ENCODE measurements at regions of chr12 and their contacts with region 1.

Region 1: GRCh38 chr12:54032627-54033100 is at the start of gene HOXC5:
- DNase-seq: peak; percentile 84
- H3K4me3 Mint-ChIP-seq: peak within 1 kb of the TSS; percentile 83
- H3K27ac Mint-ChIP-seq: no peak within 1 kb of the TSS
- H3K4me1 Mint-ChIP-seq: peaks cover 14% of the 10 kb centered on the region
- H3K27me3 Mint-ChIP-seq: peaks cover 99% of the 10 kb centered on the region
- CTCF ChIP-seq: peak; percentile 97
- total RNA-seq, gene HOXC5: 0.20 TPM in 1 of 2 replicates, not detected in the other

Region 2: DNA sequence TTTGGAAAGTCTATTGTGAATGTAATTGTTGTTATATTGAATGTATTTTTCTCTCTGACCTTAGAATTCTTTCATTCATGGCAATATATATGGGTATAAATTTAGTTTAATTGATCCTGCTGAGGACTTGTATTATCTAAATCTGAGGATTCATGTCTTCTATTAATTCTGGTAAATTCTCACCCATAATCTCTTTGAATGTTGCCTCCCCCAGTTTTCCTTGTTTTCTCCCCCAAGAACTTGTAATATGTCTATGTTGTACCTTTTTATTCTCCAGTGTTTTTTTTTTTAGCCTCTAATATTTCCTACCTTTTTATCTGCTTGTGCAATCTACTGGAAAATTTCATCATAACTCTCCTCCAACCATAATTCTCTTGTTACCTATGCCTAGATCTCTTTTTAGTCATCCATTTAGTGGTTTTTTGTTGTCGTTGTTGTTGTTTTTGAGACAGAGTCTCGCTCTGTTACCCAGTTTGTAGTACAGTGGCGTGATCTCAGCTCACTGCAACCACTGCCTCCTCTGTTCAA is 115.5 kb before region 1 on chr12:
- CTCF ChIA-PET with region 1: no interaction called
- intact Hi-C with region 1: no loop called
- DNase-seq: no peak
- H3K4me3 Mint-ChIP-seq: no peak overlapping the region
- H3K27ac Mint-ChIP-seq: no peak overlapping the region
- H3K4me1 Mint-ChIP-seq: no peaks in the 10 kb centered on the region
- H3K27me3 Mint-ChIP-seq: peaks cover 2% of the 10 kb centered on the region
- CTCF ChIP-seq: no peak

Region 3: GRCh38 chr12:53938326-53939140 is 94.1 kb before region 1 on chr12 and contains the start of gene HOXC13:
- CTCF ChIA-PET with region 1: no interaction called
- intact Hi-C with region 1: no loop called
- DNase-seq: peak; percentile 67
- H3K4me3 Mint-ChIP-seq: peak within 1 kb of the TSS; percentile 33
- H3K27ac Mint-ChIP-seq: no peak within 1 kb of the TSS
- H3K4me1 Mint-ChIP-seq: no peaks in the 10 kb centered on the region
- H3K27me3 Mint-ChIP-seq: peaks cover 97% of the 10 kb centered on the region
- CTCF ChIP-seq: no peak
- total RNA-seq, gene HOXC13: not detected in 2 replicates

Region 4: GRCh38 chr12:54005853-54006686 is 26.6 kb before region 1 on chr12:
- CTCF ChIA-PET with region 1: interaction called, 16 read pairs
- intact Hi-C with region 1: no loop called
- DNase-seq: peak; percentile 90
- H3K4me3 Mint-ChIP-seq: peak overlapping the region; percentile 28
- H3K27ac Mint-ChIP-seq: no peak overlapping the region
- H3K4me1 Mint-ChIP-seq: peaks cover 12% of the 10 kb centered on the region
- H3K27me3 Mint-ChIP-seq: peaks cover 100% of the 10 kb centered on the region
- CTCF ChIP-seq: peak; percentile 95

Region 5: DNA sequence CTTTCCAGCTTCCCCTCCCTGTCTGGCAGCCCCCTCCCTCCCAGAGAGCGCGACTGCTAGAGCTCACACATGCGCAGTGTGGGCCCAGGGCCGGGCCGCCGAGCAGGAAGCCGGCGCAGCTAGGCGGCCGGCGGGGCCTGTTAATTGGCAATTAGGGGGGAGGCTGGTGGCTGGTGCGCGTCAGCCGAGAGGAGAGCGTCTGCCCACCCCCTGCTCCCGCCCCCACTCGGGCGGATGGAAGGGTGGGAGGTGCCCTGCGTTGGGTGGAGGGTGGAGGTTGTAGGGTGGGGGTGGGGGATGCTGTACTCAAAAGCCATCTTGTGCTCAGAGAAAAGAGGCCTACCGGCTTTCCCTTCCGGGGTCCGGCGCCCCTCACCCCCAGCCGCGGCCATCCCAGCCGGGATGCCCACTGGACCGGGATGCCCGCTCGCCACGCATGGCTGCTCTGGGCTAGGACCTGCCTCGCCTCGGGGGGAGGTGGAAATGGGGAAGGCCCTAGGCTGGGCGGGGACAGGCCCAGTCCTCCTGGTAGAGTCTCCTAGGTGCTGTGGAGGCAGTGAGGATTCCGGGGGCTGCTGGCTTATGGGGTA is 14.7 kb before region 1 on chr12:
- CTCF ChIA-PET with region 1: interaction called, 25 read pairs
- intact Hi-C with region 1: no loop called
- DNase-seq: peak; percentile 81
- H3K4me3 Mint-ChIP-seq: peak overlapping the region; percentile 77
- H3K27ac Mint-ChIP-seq: no peak overlapping the region
- H3K4me1 Mint-ChIP-seq: no peaks in the 10 kb centered on the region
- H3K27me3 Mint-ChIP-seq: peaks cover 80% of the 10 kb centered on the region
- CTCF ChIP-seq: no peak

Region 6: GRCh38 chr12:54134850-54135249 is 102.2 kb after region 1 on chr12:
- CTCF ChIA-PET with region 1: interaction called, 17 read pairs
- intact Hi-C with region 1: loop called (anchors 1 kb)
- DNase-seq: peak; percentile 15
- H3K4me3 Mint-ChIP-seq: no peak overlapping the region
- H3K27ac Mint-ChIP-seq: no peak overlapping the region
- H3K4me1 Mint-ChIP-seq: peaks cover 45% of the 10 kb centered on the region
- H3K27me3 Mint-ChIP-seq: no peaks in the 10 kb centered on the region
- CTCF ChIP-seq: no peak

Region 7: GRCh38 chr12:54191550-54192022 is 158.9 kb after region 1 on chr12:
- CTCF ChIA-PET with region 1: interaction called, 59 read pairs
- intact Hi-C with region 1: loop called (anchors 1 kb)
- DNase-seq: peak; percentile 85
- H3K4me3 Mint-ChIP-seq: no peak overlapping the region
- H3K27ac Mint-ChIP-seq: no peak overlapping the region
- H3K4me1 Mint-ChIP-seq: peaks cover 24% of the 10 kb centered on the region
- H3K27me3 Mint-ChIP-seq: peaks cover 66% of the 10 kb centered on the region
- CTCF ChIP-seq: peak; percentile 76

Region 8: GRCh38 chr12:54201001-54201794 is 168.5 kb after region 1 on chr12:
- CTCF ChIA-PET with region 1: interaction called, 58 read pairs
- intact Hi-C with region 1: no loop called
- DNase-seq: peak; percentile 88
- H3K4me3 Mint-ChIP-seq: no peak overlapping the region
- H3K27ac Mint-ChIP-seq: no peak overlapping the region
- H3K4me1 Mint-ChIP-seq: no peaks in the 10 kb centered on the region
- H3K27me3 Mint-ChIP-seq: peaks cover 82% of the 10 kb centered on the region
- CTCF ChIP-seq: peak; percentile 98

Region 9: DNA sequence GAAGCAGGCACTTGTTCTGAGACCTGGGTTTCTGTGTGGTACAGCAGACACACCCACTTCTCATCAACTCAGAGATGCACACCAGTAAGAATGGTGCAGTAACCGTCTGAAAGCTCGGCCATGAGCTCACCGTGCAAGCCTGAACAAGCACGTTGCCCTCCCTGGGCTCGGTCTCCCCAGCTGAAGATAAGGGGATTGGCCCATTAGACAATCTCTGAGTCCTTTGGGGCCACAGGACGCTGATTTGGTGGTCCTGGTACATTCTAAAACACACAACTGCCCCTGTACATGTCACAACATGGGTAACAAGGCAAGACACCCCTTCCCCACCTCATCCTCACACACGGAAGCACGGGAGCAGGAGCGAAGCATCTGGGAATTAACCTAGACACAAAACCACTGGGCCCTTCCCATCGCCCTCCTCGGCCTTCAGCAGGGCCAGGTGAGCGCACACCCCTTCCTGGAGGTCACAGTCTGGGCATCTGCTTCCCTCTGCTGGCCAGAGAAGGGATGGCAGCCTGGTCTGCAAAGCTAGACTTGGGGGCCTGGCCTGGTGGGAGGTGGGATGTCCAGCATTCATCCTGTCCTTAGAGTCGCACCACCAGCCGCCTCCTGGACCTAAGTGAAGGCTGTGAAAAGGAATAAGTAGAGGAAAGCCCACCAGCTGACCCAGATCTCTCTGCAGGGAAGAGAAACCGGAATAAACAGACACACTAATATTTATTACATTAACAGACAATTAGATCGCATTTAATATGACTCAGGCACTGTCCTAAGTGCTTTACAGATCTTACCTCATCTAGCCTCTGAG is 175.0 kb after region 1 on chr12:
- CTCF ChIA-PET with region 1: interaction called, 11 read pairs
- intact Hi-C with region 1: no loop called
- DNase-seq: peak; percentile 92
- H3K4me3 Mint-ChIP-seq: no peak overlapping the region
- H3K27ac Mint-ChIP-seq: no peak overlapping the region
- H3K4me1 Mint-ChIP-seq: no peaks in the 10 kb centered on the region
- H3K27me3 Mint-ChIP-seq: peaks cover 86% of the 10 kb centered on the region
- CTCF ChIP-seq: peak; percentile 92

Measured in Calu3 (cell line).